RWPE1 (cell line): ENCODE measurements at regions of chr6 and their contacts with region 1.

Region 1: GRCh38 chr6:49625140-49625539 is 11.5 kb downstream of the RHAG start:
- DNase-seq: no peak
- H3K27ac ChIP-seq: no peak overlapping the region
- CTCF ChIP-seq: no peak

Region 2: DNA sequence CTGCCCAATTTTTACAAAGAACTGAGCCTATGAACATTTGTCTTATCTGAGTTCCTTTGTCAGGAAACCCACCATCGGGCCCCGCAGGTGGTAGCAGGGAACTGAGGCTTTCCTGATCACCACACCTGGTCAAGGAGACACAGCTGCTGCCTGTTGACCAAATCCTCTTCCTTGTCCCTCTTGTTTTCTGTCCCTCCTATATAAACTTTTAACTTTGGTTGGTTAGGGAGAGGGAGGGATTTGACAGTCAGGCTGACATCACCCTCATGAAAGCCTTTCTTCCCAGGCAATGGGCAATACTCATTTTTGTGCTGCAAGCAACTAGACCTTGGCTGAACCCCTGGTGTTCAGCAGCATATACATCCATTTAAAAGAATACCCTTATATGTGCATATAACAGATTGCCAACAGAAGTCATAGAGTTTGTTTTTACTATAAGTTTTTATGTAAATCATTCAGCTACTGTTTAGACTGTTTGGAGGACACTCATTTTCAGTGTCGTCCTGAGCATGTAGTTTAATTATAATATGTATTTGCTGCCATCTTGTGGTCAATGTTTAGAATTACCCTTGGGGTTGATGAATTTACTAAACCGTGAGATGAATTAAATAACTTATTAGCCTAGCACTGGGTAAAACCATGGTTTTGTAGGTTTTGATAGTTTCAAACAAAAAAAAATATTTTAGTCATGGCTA is 224.2 kb after region 1 on chr6:
- CTCF ChIA-PET with region 1: interaction called, 19 read pairs
- POLR2A ChIA-PET with region 1: no interaction called
- DNase-seq: peak; percentile 38
- H3K27ac ChIP-seq: no peak overlapping the region
- CTCF ChIP-seq: peak; percentile 50